ENCODE measurements at regions of chr1 and their contacts with region 1.

Region 1: GRCh38 chr1:211323156-211324063 is 3.2 kb upstream of the TRAF5 start:
- DNase-seq: peak; percentile 76
- ATAC-seq: peak; percentile 62
- H3K4me3 ChIP-seq: no peak overlapping the region
- H3K27ac ChIP-seq: no peak overlapping the region
- H3K4me1 ChIP-seq: peaks cover 17% of the 10 kb centered on the region
- H3K27me3 ChIP-seq: no peaks in the 10 kb centered on the region
- CTCF ChIP-seq: peak; percentile 97

Region 2: DNA sequence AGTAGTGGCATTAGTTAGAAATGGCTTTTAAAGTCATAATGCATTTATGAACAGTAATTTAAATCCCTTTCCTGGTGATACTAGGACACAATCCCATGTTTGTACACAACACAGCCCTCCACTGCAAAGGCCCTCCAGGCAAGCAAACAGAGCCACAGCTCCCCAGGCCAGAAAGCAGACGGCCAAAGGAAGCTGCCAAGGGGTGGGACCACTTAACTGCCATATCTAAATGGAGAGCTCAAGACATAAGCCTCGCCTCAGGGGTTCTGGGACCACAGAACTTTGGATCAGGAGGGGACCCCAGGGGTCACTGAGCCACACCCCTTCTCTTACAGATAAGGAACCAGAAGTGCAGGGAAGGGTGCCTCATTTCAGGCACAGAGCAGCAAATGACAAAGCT is 379.2 kb before region 1 on chr1:
- CTCF ChIA-PET with region 1: no interaction called
- POLR2A ChIA-PET with region 1: no interaction called
- intact Hi-C with region 1: no loop called
- DNase-seq: no peak
- ATAC-seq: no peak
- H3K4me3 ChIP-seq: no peak overlapping the region
- H3K27ac ChIP-seq: no peak overlapping the region
- H3K4me1 ChIP-seq: no peaks in the 10 kb centered on the region
- H3K27me3 ChIP-seq: peaks cover 14% of the 10 kb centered on the region
- CTCF ChIP-seq: no peak

Region 3: DNA sequence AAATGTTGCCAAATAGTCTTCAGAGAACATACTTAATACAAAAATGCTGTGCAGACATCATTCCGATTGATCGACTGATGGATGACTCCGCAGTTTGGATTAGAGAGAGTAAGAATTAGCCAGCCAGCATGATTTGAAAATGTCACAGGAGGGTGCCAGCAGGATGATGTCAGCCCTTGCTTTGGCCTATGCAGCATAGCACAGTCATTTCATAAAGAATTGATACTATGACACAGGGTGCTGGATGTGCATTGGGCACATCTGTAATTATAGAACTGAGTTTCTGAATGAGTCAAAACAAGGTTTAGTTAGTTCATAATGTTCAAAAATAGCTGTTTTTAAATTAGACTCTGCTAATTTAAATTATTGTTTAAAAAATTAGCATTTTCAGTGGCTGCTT is 18.4 kb before region 1 on chr1:
- CTCF ChIA-PET with region 1: interaction called, 15 read pairs
- POLR2A ChIA-PET with region 1: no interaction called
- intact Hi-C with region 1: no loop called
- DNase-seq: no peak
- ATAC-seq: no peak
- H3K4me3 ChIP-seq: no peak overlapping the region
- H3K27ac ChIP-seq: no peak overlapping the region
- H3K4me1 ChIP-seq: no peaks in the 10 kb centered on the region
- H3K27me3 ChIP-seq: no peaks in the 10 kb centered on the region
- CTCF ChIP-seq: no peak

Region 4: DNA sequence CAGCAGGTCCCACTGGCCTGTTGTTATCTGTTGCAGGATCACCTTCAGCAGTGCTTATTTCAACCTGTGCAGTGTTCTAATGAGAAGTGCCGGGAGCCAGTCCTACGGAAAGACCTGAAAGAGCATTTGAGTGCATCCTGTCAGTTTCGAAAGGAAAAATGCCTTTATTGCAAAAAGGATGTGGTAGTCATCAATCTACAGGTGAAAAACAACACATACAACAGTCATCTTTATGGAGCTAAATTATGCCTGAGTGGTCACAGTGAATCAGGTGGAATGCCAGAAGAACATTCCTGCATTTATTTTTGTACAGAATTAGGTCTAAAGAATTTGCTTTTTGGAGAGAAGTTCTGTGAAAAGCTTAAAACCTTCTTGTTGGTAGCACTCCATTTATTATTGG is 36.5 kb after region 1 on chr1:
- CTCF ChIA-PET with region 1: no interaction called
- POLR2A ChIA-PET with region 1: no interaction called
- intact Hi-C with region 1: no loop called
- DNase-seq: peak; percentile 9
- ATAC-seq: no peak
- H3K4me3 ChIP-seq: no peak overlapping the region
- H3K27ac ChIP-seq: no peak overlapping the region
- H3K4me1 ChIP-seq: no peaks in the 10 kb centered on the region
- H3K27me3 ChIP-seq: no peaks in the 10 kb centered on the region
- CTCF ChIP-seq: no peak

Region 5: GRCh38 chr1:211371406-211372105 is 48.1 kb after region 1 on chr1:
- CTCF ChIA-PET with region 1: no interaction called
- POLR2A ChIA-PET with region 1: no interaction called
- intact Hi-C with region 1: no loop called
- DNase-seq: peak; percentile 32
- ATAC-seq: peak; percentile 56
- H3K4me3 ChIP-seq: no peak overlapping the region
- H3K27ac ChIP-seq: no peak overlapping the region
- H3K4me1 ChIP-seq: peaks cover 5% of the 10 kb centered on the region; the same call in 1 of the 2 replicates
- H3K27me3 ChIP-seq: no peaks in the 10 kb centered on the region
- CTCF ChIP-seq: no peak

Region 6: GRCh38 chr1:211382714-211383480 is 59.5 kb after region 1 on chr1:
- CTCF ChIA-PET with region 1: no interaction called
- POLR2A ChIA-PET with region 1: interaction called, 4 read pairs
- intact Hi-C with region 1: loop called (anchors 2 kb)
- DNase-seq: peak; percentile 97
- ATAC-seq: peak; percentile 96
- H3K4me3 ChIP-seq: peak overlapping the region; percentile 86
- H3K27ac ChIP-seq: peak overlapping the region; percentile 77
- H3K4me1 ChIP-seq: peaks cover 25% of the 10 kb centered on the region
- H3K27me3 ChIP-seq: no peaks in the 10 kb centered on the region
- CTCF ChIP-seq: no peak

Region 7: GRCh38 chr1:211514030-211514754 is 190.8 kb after region 1 on chr1:
- CTCF ChIA-PET with region 1: no interaction called
- POLR2A ChIA-PET with region 1: no interaction called
- intact Hi-C with region 1: loop called (anchors 1 kb)
- DNase-seq: peak; percentile 95
- ATAC-seq: peak; percentile 80
- H3K4me3 ChIP-seq: peak overlapping the region; percentile 21; the same call in 1 of the 2 replicates
- H3K27ac ChIP-seq: no peak overlapping the region
- H3K4me1 ChIP-seq: peaks cover 28% of the 10 kb centered on the region
- H3K27me3 ChIP-seq: no peaks in the 10 kb centered on the region
- CTCF ChIP-seq: peak; percentile 92

Region 8: GRCh38 chr1:211654838-211655787 is 331.7 kb after region 1 on chr1:
- CTCF ChIA-PET with region 1: interaction called, 4 read pairs
- POLR2A ChIA-PET with region 1: no interaction called
- intact Hi-C with region 1: loop called (anchors 1 kb)
- DNase-seq: peak; percentile 93
- ATAC-seq: peak; percentile 88
- H3K4me3 ChIP-seq: no peak overlapping the region
- H3K27ac ChIP-seq: no peak overlapping the region
- H3K4me1 ChIP-seq: peaks cover 13% of the 10 kb centered on the region
- H3K27me3 ChIP-seq: no peaks in the 10 kb centered on the region
- CTCF ChIP-seq: peak; percentile 99

Measured in PC-3 (cell line).